CD4-positive, alpha-beta memory T cell (primary cell): ENCODE measurements at regions of chr10 and their contacts with region 1.

Region 1: DNA sequence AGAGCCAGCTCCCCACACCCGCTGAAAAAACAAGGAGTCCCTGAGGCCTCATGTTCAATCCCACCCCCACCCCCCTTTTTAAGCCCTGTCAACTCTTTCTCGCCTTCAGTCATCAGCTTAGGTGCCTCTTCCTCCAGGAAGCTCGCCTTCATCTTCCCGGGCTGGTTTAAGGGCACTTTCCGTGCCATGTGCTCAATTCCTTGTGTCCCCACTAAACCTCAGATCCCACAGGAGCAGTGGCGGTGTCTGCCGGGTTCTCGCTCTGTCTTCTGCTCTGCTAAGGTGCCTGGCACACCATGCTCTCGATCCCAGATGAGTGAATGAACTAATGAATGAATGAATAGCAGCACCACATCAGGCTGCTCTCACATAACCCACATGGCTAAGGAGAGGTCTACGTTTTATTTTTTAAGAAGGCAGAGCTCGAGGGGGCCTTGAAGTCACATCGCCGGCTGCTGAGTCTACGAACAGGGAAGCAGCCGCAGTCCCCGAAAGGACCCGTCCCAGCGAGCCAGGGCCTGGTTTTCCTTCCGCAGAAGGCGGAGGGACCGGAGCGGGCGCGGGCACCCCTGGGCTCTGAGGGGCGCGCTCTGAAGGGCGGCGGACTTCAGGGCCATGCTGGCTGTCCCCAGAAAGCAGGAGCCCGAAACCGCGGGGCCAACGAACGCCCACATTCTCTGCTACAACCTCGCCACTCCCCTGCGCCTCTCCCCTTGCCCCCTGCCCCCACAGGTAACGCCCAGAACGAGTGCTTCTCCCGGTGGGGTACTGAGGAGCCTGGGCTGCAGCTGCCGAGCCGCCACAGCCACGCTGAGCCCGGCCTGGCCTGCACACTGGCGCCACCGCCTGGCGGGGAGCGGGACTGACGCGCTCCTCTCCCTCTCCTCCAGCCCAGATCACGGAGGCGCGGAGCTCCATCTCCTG is 73.4 kb upstream of the KCNMA1 start:
- DNase-seq: peak; percentile 43 to 69 (median 68)
- H3K4me3 ChIP-seq: no peak overlapping the region
- H3K4me3 Mint-ChIP-seq: peak overlapping the region; percentile 49 to 77 (median 67)
- H3K27ac ChIP-seq: no peak overlapping the region
- H3K27ac Mint-ChIP-seq: peak overlapping the region in 1 of 7 donors; percentile 58
- H3K4me1 ChIP-seq: peaks cover 12% of the 10 kb centered on the region
- H3K4me1 Mint-ChIP-seq: peaks cover 4 to 10% (median 7%) of the 10 kb centered on the region in 4 donors
- H3K27me3 ChIP-seq: peaks cover 3% of the 10 kb centered on the region
- H3K27me3 Mint-ChIP-seq: peaks cover 6 to 14% of the 10 kb centered on the region in 2 donors

Region 2: DNA sequence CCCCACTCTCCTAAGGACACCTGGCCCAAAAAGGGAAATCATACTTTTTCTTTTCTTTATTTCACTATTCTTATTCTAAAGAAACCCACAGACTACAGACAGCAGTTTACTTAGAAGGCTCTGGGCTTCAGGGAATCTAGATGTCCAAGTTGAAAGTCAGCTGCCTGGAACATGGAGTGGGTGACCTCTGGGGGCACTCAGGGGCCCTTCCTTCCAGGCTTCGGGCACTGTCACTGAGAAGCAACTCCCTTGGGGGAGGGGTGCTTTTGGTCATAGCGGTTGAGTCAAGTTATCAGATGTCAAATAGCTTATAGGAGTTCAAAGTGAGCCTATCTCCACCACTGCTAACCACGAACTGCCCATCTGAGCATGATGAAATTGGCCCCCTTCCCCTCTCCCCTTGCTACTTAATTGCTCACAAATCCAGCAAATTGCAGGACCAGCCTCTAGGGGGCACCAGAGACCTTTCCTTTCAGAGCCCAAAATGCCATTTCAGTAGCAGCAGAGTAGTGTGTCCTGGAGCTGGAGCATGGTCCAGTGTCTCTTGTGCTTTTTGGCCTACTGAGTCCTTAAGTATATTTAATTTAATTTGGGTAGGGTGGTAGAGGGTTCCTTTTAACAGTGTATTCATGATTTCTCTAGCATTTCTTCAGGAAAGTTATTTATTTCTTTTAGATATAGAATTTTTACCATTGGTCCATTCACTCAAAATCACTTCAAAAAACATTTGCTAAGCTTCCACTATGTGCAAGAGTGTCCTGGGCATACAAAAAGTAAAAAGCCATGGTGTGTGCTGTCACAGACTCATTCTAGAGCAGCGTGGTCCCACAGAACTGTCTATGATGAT is 537.2 kb before region 1 on chr10:
- CTCF ChIA-PET with region 1: interaction called, 10 read pairs
- POLR2A ChIA-PET with region 1: no interaction called
- intact Hi-C with region 1: no loop called
- DNase-seq: peak; percentile 29 to 47 (median 39)
- H3K4me3 ChIP-seq: no peak overlapping the region
- H3K4me3 Mint-ChIP-seq: no peak overlapping the region
- H3K27ac ChIP-seq: no peak overlapping the region
- H3K27ac Mint-ChIP-seq: no peak overlapping the region
- H3K4me1 ChIP-seq: no peaks in the 10 kb centered on the region
- H3K4me1 Mint-ChIP-seq: no peaks in the 10 kb centered on the region
- H3K27me3 ChIP-seq: no peaks in the 10 kb centered on the region
- H3K27me3 Mint-ChIP-seq: peaks cover 3 to 14% of the 10 kb centered on the region in 2 donors

Region 3: DNA sequence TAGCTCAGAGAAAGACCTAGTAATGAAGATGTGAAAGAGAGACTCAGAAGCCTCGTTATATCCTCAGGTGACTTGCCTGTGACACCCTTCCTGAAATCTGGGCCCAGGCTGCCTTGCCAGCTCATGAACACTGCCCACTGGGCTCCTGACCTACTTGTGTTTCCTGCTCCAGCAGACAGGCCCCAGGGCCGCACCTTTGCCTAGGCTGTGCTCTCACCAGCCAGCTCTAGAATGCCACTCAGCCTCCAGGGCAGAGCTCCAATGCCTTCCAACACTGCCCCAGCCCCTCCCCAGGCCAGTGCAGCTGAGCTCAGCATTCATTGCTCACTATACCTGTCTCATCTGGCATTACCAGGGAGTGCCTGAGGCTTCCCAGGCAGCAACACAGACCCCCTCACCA is 121.2 kb after region 1 on chr10:
- CTCF ChIA-PET with region 1: interaction called, 282 read pairs
- POLR2A ChIA-PET with region 1: interaction called, 4 read pairs
- intact Hi-C with region 1: loop called (anchors 1 kb)
- DNase-seq: peak; percentile 59 to 81 (median 72)
- H3K4me3 ChIP-seq: no peak overlapping the region
- H3K4me3 Mint-ChIP-seq: peak overlapping the region in 7 of 8 donors; percentile 25 to 82 (median 63)
- H3K27ac ChIP-seq: peak overlapping the region; percentile 53
- H3K27ac Mint-ChIP-seq: peak overlapping the region; percentile 92 to 97 (median 96)
- H3K4me1 ChIP-seq: peaks cover 39% of the 10 kb centered on the region
- H3K4me1 Mint-ChIP-seq: peaks cover 23 to 51% (median 38%) of the 10 kb centered on the region in 4 donors
- H3K27me3 ChIP-seq: no peaks in the 10 kb centered on the region
- H3K27me3 Mint-ChIP-seq: no peaks in the 10 kb centered on the region

Region 4: GRCh38 chr10:77846718-77847630 is 136.0 kb after region 1 on chr10:
- CTCF ChIA-PET with region 1: interaction called, 282 read pairs
- POLR2A ChIA-PET with region 1: no interaction called
- intact Hi-C with region 1: no loop called
- DNase-seq: peak in 4 of 5 donors; percentile 49 to 56 (median 50)
- H3K4me3 ChIP-seq: no peak overlapping the region
- H3K4me3 Mint-ChIP-seq: no peak overlapping the region
- H3K27ac ChIP-seq: no peak overlapping the region
- H3K27ac Mint-ChIP-seq: peak overlapping the region in 4 of 7 donors; percentile 23 to 53 (median 45)
- H3K4me1 ChIP-seq: no peaks in the 10 kb centered on the region
- H3K4me1 Mint-ChIP-seq: peaks cover 0 to 4% (median 0%) of the 10 kb centered on the region in 4 donors
- H3K27me3 ChIP-seq: no peaks in the 10 kb centered on the region
- H3K27me3 Mint-ChIP-seq: no peaks in the 10 kb centered on the region

Region 5: DNA sequence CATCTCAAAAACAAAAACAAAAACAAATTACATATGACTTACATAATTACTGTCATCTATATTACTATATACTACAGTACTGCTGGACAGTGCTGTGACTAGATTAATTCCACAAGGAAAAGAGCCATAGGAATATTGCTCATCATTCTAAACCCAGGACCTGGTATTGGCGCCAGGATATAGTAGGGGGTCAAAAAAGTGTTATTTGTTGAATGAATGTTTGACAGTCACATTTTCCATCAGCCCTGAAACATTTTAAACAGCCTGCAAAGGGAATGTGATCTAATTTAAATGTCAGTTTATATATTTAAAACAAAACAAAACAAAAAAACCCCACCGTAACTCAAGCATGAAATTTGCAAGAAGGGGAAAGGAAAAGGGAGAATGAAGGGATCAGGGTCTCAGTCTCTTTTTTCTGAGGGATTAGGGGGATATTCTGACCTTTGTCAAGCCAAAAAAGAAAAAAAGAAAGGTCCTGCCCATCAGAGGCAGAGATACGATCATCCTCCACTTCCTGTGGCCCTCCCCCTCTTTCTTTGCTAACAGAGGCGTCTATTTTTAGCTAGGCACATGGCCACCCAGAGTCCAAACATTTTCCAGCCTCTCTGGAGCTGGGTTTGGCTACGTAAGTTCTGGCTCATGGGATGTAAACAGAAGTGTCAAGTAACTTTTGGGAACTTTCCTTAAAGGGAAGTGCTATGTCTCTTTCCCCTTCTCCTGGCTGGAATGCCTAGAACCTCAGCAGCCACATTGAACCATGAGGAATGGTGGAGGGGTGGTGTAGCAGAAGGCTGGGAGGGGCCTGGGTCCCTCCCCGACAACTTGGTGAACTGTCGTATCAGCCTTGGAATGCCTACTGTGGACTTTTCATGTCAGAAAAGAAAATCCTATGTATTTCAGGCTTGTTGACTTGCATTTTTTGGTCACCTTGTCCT is 260.1 kb after region 1 on chr10:
- CTCF ChIA-PET with region 1: no interaction called
- POLR2A ChIA-PET with region 1: no interaction called
- intact Hi-C with region 1: no loop called
- DNase-seq: no peak
- H3K4me3 ChIP-seq: no peak overlapping the region
- H3K4me3 Mint-ChIP-seq: peak overlapping the region in 1 of 8 donors; percentile 46
- H3K27ac ChIP-seq: no peak overlapping the region
- H3K27ac Mint-ChIP-seq: peak overlapping the region in 4 of 7 donors; percentile 6 to 66 (median 48)
- H3K4me1 ChIP-seq: peaks cover 9% of the 10 kb centered on the region
- H3K4me1 Mint-ChIP-seq: peaks cover 6 to 15% (median 11%) of the 10 kb centered on the region in 4 donors
- H3K27me3 ChIP-seq: no peaks in the 10 kb centered on the region
- H3K27me3 Mint-ChIP-seq: no peaks in the 10 kb centered on the region